Activated T-helper 1 cell treated with anti-CD3 and anti-CD28 coated beads, Interleukin-12 subunit alpha, Interleukin-12 subunit beta, Interleukin-2, Interleukin-4 antibody, amounts not matched to agents 30 ng/mL and 10 ng/mL and 1 ng/mL, durations not matched to agents 14 hours and 24 hours and 36 hours (primary cell): ENCODE measurements at regions of chr1 and their contacts with region 1.

Region 1: DNA sequence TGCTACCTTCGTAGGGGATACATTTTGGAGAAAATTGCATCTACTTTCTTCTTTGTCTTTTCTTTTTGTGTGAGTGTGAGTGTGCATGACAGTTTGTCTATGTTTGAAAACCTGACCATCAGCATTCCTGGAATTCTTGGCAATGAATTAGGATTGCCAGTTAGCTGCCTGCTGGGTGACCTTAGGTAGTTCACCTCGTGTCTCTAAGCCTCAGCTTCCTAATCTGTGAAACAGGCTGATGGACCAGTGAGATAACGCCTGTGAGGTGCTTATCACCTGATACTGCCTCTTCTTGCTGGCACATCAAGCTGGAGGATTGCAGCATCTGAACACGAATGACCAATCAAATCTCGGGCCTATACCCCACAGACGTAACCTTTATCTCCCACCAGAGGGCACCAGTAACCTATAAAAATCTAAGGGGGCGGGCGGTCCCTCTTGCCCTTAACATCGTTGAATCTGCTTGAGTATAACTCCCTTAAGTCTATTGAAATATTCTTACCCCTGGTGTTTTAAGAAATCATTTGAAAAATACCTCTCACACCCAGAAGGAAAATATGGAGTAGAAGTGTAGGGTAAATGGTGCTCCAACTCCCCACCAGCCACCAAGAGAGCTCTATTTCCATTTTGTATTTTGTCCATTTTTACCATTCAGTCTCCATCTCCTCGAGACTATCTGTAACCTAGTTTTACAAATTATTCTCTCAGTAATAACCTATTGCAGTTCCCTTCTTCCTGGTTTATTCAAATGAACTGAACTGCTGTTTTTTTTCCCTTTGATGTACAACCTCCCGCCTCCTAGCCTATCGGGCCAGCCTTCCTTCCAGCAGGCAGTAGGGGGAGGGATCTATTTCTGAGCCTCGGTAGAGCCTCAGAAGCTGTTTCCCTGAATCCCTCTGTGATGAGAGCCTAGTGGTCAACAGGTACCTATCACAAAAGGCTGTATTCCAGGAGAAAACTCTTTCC is 49.7 kb downstream of the MDM4 start:
- DNase-seq: peak; percentile 56
- H3K4me3 Mint-ChIP-seq: no peak overlapping the region
- H3K27ac Mint-ChIP-seq: peak overlapping the region; percentile 68
- H3K4me1 Mint-ChIP-seq: peaks cover 67% of the 10 kb centered on the region
- H3K27me3 Mint-ChIP-seq: no peaks in the 10 kb centered on the region

Region 2: GRCh38 chr1:204426029-204426436 is 139.9 kb before region 1 on chr1:
- intact Hi-C with region 1: no loop called
- DNase-seq: no peak
- H3K4me3 Mint-ChIP-seq: no peak overlapping the region
- H3K27ac Mint-ChIP-seq: no peak overlapping the region
- H3K4me1 Mint-ChIP-seq: no peaks in the 10 kb centered on the region
- H3K27me3 Mint-ChIP-seq: no peaks in the 10 kb centered on the region

Region 3: GRCh38 chr1:204544321-204544720 is 21.6 kb before region 1 on chr1:
- intact Hi-C with region 1: loop called (anchors 2 kb)
- DNase-seq: no peak
- H3K4me3 Mint-ChIP-seq: peak overlapping the region; percentile 35
- H3K27ac Mint-ChIP-seq: peak overlapping the region; percentile 66
- H3K4me1 Mint-ChIP-seq: peaks cover 57% of the 10 kb centered on the region
- H3K27me3 Mint-ChIP-seq: no peaks in the 10 kb centered on the region

Region 4: DNA sequence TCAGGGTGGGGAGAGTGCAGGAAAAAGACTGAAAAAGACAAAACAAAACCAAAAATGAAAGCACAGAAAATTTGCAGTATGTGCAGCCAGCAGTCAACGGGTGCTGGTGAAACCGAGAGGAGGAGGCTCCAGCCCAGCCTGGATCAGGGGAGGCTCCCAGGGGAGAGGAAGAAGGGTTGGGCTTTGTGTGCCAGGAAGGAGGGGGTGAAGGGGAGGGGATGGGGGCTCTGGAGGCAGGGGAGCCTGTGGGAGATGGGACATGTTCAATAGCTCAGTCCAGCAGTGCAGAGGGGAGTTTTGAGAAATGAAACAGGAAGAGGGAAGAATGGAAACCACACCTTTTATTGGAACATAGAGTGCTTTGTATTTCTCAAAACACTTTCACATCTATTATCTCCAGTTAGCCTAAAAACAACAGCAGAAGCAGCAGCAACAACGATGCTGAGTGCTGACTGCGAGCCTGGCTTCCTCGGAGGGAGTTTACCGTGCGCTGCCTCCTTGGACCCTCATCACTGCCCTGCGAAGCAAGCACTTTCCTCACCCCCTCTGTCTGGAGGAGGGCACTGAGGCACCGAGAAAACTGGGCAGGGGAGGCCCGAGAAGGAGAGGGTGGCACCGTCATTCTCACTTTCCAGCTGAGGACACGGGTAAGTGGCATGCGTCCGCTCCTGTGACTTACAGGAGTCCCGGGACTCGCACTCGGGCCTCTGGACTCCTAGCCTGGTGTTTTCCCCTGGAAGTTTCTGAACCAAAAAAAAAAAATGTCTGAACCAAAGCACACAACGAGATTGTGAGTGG is 13.2 kb after region 1 on chr1:
- intact Hi-C with region 1: loop called (anchors 1 kb)
- DNase-seq: peak; percentile 42
- H3K4me3 Mint-ChIP-seq: peak overlapping the region; percentile 72
- H3K27ac Mint-ChIP-seq: peak overlapping the region; percentile 95
- H3K4me1 Mint-ChIP-seq: peaks cover 32% of the 10 kb centered on the region
- H3K27me3 Mint-ChIP-seq: no peaks in the 10 kb centered on the region

Region 5: DNA sequence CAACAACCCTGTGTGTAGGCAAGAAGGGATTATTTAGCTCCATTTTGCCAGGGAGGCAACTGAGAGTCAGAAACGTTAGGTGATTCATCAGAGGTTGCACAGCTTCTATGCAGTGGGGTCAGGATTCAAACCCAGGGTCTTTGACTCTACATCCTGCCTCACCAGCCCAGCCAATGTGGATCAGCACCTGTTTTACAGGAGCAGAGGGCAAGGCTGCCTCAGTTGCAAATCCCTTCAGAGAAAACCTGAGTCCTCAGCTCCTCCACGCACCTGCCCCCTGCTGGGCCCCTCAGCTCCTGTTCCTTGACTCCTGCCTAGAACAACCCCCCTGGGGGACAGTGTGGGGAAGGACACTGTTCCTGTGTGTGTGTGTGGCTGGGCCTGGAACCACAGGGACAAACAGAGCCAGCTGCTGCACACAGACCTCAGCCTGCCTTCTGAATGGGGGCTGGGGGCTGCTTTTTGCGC is 58.0 kb after region 1 on chr1:
- intact Hi-C with region 1: no loop called
- DNase-seq: no peak
- H3K4me3 Mint-ChIP-seq: no peak overlapping the region
- H3K27ac Mint-ChIP-seq: no peak overlapping the region
- H3K4me1 Mint-ChIP-seq: no peaks in the 10 kb centered on the region
- H3K27me3 Mint-ChIP-seq: no peaks in the 10 kb centered on the region

Region 6: GRCh38 chr1:204763706-204764427 is 198.0 kb after region 1 on chr1:
- intact Hi-C with region 1: loop called (anchors 1 kb)
- DNase-seq: peak; percentile 64
- H3K4me3 Mint-ChIP-seq: peak overlapping the region; percentile 20
- H3K27ac Mint-ChIP-seq: no peak overlapping the region
- H3K4me1 Mint-ChIP-seq: peaks cover 11% of the 10 kb centered on the region
- H3K27me3 Mint-ChIP-seq: peaks cover 40% of the 10 kb centered on the region